MCF 10A (cell line): ENCODE measurements at regions of chr3 and their contacts with region 1.

Region 1: DNA sequence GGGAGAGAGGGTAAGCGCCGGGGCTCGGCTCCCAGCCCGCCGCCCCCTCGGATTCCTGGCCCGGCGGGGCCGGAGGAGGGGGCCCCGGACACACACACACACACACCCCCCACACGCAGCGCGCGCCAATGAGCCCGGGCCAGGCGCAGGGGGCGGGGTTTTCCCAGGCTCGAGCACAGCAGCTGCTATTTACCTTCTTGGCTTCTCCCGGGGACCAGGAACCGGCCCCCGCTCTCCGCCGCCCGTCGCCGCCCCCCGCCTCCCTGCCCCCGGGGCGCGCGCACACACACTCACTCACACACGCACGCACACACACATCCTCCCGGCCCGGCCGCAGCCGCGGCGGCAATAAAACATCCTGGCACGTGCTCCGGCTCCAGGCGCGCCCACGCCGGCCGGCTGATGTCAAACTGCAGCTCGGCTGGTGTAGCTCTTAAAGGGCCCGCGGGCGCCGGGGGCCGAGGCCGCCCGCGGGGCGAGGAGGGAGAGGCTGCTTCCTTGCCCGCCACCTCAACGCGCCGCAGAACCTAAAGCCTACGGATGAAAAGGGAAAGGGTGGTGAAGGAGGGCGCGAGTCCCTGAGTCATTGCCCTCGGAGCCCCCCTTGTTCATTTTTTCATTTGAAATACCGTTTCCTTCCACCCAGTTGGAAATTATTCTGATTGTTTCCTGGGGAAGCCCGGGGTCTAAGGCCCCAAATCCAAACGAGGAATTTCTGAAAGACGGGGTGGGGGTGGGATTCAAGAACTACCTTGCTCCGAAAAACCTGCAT is 1.0 kb upstream of the HES1 start:
- DNase-seq: peak; percentile 98
- H3K4me3 Mint-ChIP-seq: peak overlapping the region; percentile 97
- H3K27ac Mint-ChIP-seq: peak overlapping the region; percentile 73
- H3K4me1 Mint-ChIP-seq: peaks cover 24% of the 10 kb centered on the region
- H3K27me3 Mint-ChIP-seq: no peaks in the 10 kb centered on the region
- CTCF ChIP-seq: no peak

Region 2: GRCh38 chr3:193780810-193781472 is 354.0 kb before region 1 on chr3:
- CTCF ChIA-PET with region 1: interaction called, 39 read pairs
- POLR2A ChIA-PET with region 1: interaction called, 161 read pairs
- intact Hi-C with region 1: loop called (anchors 1 kb)
- DNase-seq: peak; percentile 93
- H3K4me3 Mint-ChIP-seq: no peak overlapping the region
- H3K27ac Mint-ChIP-seq: peak overlapping the region; percentile 88
- H3K4me1 Mint-ChIP-seq: peaks cover 35% of the 10 kb centered on the region
- H3K27me3 Mint-ChIP-seq: peaks cover 10% of the 10 kb centered on the region
- CTCF ChIP-seq: peak; percentile 93

Region 3: DNA sequence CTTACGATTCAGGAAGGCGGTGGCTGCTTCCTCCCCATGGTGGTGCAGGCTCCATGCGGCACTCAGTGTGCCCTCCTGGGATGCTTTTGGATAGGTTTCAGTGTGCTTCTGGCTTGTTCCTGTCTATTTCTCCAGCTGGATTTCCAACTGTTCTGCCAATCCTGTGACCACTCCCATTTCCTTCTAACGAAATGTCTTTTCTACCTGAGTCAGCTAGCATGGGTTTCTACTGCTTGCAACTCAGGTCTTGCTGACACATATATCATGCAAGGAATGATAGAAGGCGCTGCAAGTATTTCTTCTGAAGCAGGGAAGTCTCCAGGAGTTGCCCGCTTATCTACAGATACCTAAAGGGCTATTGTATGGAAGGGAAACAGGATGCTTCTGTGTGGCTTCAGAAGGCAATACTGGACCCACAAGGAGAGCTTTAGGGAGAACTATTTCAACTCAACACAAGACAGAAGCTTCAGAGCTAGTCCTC is 297.6 kb before region 1 on chr3:
- CTCF ChIA-PET with region 1: interaction called, 6 read pairs
- POLR2A ChIA-PET with region 1: interaction called, 34 read pairs
- intact Hi-C with region 1: no loop called
- DNase-seq: peak; percentile 92
- H3K4me3 Mint-ChIP-seq: peak overlapping the region; percentile 61
- H3K27ac Mint-ChIP-seq: no peak overlapping the region
- H3K4me1 Mint-ChIP-seq: peaks cover 34% of the 10 kb centered on the region
- H3K27me3 Mint-ChIP-seq: no peaks in the 10 kb centered on the region
- CTCF ChIP-seq: no peak

Region 4: DNA sequence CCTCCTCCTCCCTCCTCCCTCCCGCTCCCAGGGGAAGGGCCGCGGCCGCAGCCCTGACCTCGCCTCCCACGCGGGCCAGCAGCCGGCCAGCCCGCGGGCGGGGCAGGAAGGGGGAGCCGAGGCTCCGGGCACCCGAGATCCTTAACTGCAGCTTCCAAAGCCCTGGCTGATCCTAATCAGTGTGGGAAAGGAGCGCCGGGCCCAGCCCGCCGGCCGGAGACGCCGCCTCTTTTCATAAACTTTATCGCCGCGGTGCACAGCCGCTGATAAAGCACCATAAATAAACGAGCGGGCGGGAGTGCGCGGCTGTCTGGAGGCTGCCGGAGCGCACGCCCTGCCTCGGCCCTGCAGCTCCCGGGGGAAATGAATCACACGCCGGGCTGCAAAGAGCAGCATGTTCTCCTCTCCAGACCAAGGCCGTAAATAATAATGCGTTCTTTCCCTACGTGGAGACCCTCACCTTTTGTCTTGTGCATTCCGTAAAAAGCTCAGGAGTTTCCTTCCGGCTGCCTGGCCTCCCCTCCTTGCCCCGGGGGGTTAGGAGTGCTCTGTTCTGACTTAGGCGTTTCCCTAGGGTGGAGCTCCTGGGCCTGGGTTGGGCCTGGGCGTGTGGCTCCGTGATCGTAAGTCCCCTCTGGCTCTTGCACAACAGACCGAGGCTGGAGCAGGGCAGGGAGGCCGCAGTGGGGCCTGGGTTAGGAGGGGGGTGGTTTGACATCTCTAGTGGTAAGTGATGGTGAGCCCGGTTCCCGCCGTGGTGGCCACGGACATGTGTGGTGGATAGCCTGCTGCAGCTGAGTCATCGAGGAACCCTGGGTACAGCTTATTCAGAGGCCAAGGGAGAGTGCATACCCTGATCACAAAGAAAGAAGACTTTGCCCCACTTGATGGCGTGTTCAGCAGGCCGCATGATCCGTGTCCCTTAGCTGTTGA is 131.6 kb before region 1 on chr3:
- CTCF ChIA-PET with region 1: interaction called, 10 read pairs
- POLR2A ChIA-PET with region 1: interaction called, 100 read pairs
- intact Hi-C with region 1: loop called (anchors 1 kb)
- DNase-seq: peak; percentile 96
- H3K4me3 Mint-ChIP-seq: peak overlapping the region; percentile 67
- H3K27ac Mint-ChIP-seq: peak overlapping the region; percentile 69
- H3K4me1 Mint-ChIP-seq: peaks cover 22% of the 10 kb centered on the region
- H3K27me3 Mint-ChIP-seq: no peaks in the 10 kb centered on the region
- CTCF ChIP-seq: no peak

Region 5: GRCh38 chr3:194306771-194307640 is 172.1 kb after region 1 on chr3:
- CTCF ChIA-PET with region 1: no interaction called
- POLR2A ChIA-PET with region 1: interaction called, 17 read pairs
- intact Hi-C with region 1: no loop called
- DNase-seq: no peak
- H3K4me3 Mint-ChIP-seq: no peak overlapping the region
- H3K27ac Mint-ChIP-seq: no peak overlapping the region
- H3K4me1 Mint-ChIP-seq: peaks cover 9% of the 10 kb centered on the region
- H3K27me3 Mint-ChIP-seq: no peaks in the 10 kb centered on the region
- CTCF ChIP-seq: no peak